ENCODE measurements at regions of chr21 and their contacts with region 1.

Region 1: DNA sequence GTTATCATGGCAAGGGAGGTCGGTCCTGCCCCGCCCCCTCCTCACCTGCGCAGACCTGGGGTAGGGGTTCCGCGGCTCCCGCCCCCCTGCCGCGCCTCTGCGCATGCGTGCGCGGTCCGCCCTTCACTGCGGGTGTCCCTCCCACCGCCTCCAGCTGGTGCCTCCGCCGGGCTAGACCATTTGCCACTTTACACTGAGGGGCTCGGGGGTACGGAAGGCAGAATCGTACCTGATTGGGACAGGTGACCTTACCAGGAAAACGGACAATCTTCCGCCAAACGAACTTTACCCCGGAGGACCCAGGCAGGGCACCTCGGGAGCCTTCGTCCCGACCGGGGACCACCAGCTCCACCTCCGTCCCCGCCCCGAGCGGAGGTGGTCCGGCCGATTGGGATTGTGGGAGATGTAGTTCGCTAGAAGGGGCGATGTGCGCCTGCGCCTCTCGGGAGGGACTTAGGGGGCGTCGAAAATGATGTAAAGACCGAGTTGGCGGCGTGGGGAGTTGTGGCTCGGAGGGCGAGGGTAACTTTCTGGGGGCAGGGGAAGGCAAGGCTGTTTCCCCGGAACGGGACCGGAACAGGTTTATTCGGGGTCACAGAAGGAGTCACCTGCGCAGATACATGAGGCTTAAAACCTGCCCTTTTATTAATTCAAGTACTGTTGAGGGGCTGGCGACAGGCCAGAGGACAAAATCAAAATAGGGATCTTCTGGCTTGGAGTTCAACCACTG is at the start of gene DNAJC28:
- DNase-seq: peak; percentile 98
- H3K4me3 Mint-ChIP-seq: peak within 1 kb of the TSS; percentile 84
- H3K27ac Mint-ChIP-seq: peak within 1 kb of the TSS; percentile 72
- H3K4me1 Mint-ChIP-seq: peaks cover 10% of the 10 kb centered on the region
- H3K27me3 Mint-ChIP-seq: peaks cover 18% of the 10 kb centered on the region
- total RNA-seq, gene DNAJC28: 0.09 and 0.12 TPM in 2 replicates

Region 2: DNA sequence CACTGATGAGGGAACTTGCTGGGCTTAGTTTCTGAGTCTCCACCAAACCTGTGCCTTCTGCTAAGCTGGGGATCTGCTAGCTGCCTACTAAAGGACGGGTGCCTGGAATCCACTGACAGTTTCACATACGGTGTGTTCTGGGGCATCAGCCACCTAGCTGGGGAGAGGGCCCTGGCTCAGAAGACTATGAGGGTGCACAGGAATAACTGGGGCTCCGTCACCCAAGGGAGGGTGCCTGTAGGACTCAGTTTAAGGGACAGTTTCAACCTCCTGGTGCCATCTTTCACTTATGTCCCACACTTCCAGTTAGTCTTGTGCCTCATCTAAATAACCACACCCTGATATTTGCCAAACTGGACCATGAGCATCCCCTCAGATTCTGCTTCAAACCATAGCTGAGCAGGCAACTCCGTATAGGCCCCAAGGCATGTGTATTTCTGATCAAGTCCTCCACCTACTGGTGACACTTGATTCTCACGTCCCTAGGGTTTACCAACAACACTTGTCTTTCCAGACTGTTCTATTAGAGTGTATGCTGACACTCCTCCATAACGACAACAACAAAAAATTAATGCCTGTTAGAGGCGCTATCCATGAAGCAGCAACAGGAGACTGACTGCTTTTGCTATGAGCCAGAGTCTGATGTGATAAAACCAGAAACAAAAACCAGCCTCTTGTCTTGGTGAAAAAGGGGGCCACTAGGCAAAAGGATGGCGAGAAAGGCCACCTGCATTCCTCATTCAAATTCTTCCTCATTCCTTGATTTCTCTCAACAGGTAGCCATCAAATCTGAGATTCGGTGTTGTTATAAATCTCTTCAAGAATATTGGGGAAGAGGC is 665.0 kb before region 1 on chr21:
- intact Hi-C with region 1: no loop called
- DNase-seq: peak; percentile 82
- H3K4me3 Mint-ChIP-seq: no peak overlapping the region
- H3K27ac Mint-ChIP-seq: no peak overlapping the region
- H3K4me1 Mint-ChIP-seq: peaks cover 3% of the 10 kb centered on the region
- H3K27me3 Mint-ChIP-seq: peaks cover 20% of the 10 kb centered on the region

Region 3: GRCh38 chr21:33403779-33404585 is 87.6 kb before region 1 on chr21:
- intact Hi-C with region 1: no loop called
- DNase-seq: peak; percentile 68
- H3K4me3 Mint-ChIP-seq: peak overlapping the region; percentile 87
- H3K27ac Mint-ChIP-seq: peak overlapping the region; percentile 85
- H3K4me1 Mint-ChIP-seq: peaks cover 31% of the 10 kb centered on the region
- H3K27me3 Mint-ChIP-seq: peaks cover 39% of the 10 kb centered on the region

Region 4: DNA sequence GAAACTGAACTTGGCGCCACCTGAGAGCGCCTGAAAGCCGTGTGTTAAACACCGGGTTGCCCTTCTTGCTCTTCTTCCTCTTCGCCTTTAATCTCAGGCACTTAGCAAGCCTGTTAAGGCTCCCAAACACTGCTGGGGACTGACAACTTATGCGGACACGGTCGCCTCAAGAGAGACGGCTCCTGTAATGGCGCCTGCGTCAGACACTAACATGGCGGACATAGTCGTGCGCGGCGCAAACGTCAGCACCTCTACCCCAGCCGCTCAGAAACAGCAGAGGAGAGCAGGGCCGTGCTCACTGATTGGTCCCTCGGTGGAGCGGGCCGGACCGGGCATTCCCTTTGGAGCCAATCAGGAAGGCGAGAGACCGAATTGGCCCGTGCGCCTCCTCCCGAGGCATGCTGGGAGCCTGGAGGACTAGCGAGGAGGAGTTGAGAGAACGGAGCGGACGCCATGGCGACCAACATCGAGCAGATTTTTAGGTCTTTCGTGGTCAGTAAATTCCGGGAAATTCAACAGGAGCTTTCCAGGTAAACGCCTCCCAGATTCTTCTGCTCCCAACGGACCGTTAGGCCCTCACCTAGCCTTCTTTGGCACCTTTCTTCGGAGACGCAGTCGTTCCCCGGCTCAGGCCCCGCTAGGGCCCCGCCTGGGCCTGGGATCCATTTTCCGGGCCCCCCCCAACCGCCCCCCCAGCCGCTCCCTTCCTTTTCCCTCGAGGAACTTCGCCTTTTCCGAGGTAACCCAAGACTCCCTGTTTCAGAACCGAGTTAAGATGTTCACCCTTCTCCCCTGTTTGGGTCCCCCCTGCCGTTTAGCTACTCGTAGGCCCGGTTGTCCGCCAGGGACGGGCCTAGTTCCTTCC is 51.3 kb after region 1 on chr21 and contains the start of gene SON:
- intact Hi-C with region 1: loop called (anchors 1 kb)
- DNase-seq: peak; percentile 99
- H3K4me3 Mint-ChIP-seq: peak within 1 kb of the TSS; percentile 95
- H3K27ac Mint-ChIP-seq: peak within 1 kb of the TSS; percentile 100
- H3K4me1 Mint-ChIP-seq: peaks cover 34% of the 10 kb centered on the region
- H3K27me3 Mint-ChIP-seq: no peaks in the 10 kb centered on the region
- total RNA-seq, gene SON: 351 and 363 TPM in 2 replicates

Measured in activated CD4-positive, alpha-beta T cell treated with anti-CD3 and anti-CD28 coated beads, Interleukin-2, amount 10 ng/mL, durations not matched to agents 24 days and 14 days (primary cell).